HAP-1 (cell line): ENCODE measurements at regions of chr11 and their contacts with region 1.

Region 1: DNA sequence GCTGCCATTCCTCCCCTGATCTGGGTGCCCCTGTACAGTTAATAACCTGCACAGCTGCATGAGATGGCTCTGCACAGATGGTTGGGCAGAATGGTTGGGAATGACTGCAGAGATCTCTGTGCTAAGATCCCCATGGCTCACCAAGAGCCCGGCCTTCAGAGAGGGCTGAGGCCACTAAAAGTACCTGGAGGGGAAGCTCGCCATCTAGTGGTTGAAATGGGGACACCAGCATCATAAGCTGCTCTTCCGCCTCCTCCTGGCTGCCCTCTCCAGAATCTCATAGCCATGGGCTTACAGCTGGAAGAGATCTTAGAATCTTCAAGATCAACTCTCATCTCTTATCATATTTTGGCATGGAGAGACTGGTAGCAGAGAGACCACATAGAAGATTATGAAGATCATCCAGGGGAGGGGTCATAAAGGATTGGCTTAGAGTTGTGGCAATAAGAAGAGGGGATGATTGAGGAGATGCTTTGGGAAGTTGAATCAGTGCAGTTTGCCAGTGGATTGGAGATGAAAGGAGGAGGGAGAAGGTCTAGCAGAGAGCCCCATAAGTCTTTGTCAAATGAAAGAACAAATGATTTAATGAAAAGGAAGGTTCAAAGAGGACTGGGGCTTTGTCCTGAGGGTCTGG is 22.0 kb upstream of the TLCD5 start:
- DNase-seq: peak; percentile 52 to 86
- H3K4me3 ChIP-seq: no peak overlapping the region
- H3K4me1 ChIP-seq: no peaks in the 10 kb centered on the region
- H3K27me3 ChIP-seq: peaks cover 8% of the 10 kb centered on the region; the same call in 1 of the 2 replicates

Region 2: DNA sequence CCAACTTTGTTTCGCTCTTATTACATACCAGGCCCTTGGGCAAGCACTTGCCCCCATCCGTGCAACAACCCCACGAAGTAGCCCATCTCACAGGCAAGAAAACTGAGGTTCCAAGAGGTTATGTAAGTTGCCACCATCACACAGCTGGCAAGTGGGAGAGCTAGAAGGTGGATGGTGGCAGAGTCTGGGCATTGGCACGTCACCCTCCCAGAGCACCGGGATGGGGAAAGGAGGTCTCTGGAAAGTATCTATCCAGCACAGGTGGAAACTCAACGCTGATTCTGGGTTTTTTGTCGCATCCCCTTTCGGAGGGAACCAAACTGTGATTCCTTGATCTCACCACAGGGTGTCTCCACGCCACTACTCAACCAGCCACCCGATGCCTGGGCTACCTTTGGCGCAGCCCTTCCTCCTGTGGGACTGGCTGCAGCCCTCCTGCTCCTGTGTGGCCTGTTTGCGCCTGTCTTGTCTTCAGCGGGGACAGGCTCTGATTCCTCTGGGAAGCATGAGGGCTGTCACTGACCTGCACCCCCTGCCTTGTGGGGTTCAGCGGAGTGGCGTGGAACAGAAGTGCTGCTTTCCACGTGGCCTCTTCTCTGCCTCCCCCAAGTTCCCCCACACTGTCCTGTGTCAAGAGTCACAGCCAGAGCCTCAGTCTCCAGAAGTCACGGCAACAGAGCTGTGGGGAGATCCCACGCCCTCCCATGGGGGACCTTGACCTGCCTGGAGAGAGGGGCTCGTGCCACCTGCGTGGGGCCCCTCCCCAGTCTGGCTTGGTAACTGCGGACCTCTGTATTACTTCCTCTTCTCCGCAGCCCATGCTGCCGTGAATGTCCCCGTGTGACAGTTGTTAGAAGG is 130.8 kb before region 1 on chr11:
- in situ Hi-C with region 1: loop called (anchors 5 kb)
- DNase-seq: peak; percentile 62 to 78
- H3K4me3 ChIP-seq: no peak overlapping the region
- H3K4me1 ChIP-seq: peaks cover 4% of the 10 kb centered on the region; the same call in 1 of the 2 replicates
- H3K27me3 ChIP-seq: peaks cover 17% of the 10 kb centered on the region

Region 3: DNA sequence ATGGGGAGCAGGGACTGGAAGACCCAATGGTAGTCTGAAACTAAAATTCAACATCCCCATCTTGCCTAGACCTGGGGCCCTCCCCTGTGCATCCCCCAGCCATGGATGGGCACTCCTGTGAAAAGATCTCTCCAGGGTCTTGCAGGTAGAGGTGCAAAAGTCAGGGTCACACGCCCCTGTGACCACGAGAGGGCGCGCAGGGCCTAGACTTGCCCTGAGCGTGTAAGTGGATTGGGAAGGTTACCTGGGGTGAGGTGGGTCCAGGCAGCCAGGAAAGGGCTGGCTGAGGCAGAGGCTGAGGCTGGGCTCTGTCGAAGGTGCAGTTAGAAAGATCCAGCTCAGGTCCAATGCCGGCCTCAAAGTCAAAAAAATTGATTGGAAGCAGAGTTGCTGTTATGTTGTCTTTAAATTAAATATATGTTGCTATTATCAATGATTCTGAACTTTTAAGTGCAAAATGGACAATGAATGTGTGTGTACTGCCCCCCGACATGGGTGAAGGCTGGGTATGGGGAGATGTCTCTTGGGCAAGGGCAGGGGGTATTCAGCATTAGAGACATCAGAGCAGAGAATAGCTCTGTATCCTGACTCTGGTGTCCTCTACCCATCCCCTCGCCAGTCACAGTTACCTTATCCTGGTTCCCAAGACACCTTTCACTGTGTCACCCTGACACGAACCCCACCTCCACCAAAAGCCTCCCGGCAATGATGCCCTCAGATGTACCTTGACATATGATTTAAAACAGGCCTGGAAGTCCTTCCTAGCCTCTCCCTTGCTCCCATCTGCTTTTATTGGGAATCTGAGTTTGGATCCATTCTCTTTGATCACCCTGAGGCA is 67.9 kb before region 1 on chr11:
- in situ Hi-C with region 1: loop called (anchors 5 kb)
- DNase-seq: peak; percentile 34 to 80
- H3K4me3 ChIP-seq: no peak overlapping the region
- H3K4me1 ChIP-seq: no peaks in the 10 kb centered on the region
- H3K27me3 ChIP-seq: peaks cover 26% of the 10 kb centered on the region